GM10248 (cell line): ENCODE measurements at regions of chr14 and their contacts with region 1.

Region 1: DNA sequence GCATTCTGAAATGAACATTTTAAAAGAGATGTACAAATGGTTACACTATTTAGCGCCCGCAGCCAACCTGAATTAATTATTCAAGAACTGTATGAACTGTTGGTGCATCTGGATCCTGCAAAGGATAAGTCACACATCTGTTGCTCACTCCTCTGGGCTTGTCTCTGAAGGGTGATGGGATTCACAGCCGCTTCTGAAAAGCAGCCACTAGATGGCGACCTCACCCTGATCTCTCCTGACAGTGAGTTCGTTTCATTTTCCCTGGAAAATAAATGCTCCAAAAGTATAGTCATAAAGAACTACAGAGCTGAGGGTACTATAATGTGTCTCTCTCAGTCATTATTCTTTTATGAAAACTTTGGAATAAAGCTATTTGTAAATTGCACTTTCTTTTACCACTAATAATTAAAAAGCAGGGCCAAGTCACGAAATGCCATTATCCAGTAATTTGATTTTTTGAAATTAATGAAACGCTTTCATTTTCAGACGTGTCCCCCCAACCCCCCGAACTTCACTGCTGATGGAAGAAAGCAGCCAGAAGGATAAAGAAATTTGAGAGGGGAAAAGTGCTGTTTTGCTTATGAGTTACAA is 789.6 kb downstream of the NRXN3 start:
- DNase-seq: peak; percentile 53
- CTCF ChIP-seq: peak; percentile 89

Region 2: DNA sequence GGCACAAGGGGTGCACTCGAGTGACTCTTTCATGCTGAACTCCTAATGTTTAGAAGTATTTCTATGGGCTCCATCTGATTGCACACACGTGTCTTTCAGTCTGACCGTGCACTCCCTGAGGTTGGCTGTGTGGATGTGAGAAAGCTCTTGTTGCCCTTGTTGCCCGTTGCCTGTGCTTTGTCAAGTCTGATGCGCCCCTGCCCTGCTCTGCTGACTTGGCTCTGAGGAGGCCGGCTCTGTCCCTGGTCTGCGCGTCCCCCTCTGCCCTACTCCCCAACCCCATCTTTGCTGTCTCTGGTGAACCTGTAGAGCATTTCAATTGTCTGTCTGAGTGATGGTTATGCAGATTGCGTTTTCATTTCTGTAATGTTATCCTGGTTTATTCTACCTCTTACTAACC is 12.7 kb after region 1 on chr14:
- CTCF ChIA-PET with region 1: interaction called, 32 read pairs
- POLR2A ChIA-PET with region 1: no interaction called
- DNase-seq: no peak
- CTCF ChIP-seq: no peak

Region 3: GRCh38 chr14:79197516-79197915 is 237.7 kb after region 1 on chr14:
- CTCF ChIA-PET with region 1: no interaction called
- POLR2A ChIA-PET with region 1: no interaction called
- DNase-seq: no peak
- CTCF ChIP-seq: no peak